ENCODE measurements at regions of chr3 and their contacts with region 1.

Region 1: DNA sequence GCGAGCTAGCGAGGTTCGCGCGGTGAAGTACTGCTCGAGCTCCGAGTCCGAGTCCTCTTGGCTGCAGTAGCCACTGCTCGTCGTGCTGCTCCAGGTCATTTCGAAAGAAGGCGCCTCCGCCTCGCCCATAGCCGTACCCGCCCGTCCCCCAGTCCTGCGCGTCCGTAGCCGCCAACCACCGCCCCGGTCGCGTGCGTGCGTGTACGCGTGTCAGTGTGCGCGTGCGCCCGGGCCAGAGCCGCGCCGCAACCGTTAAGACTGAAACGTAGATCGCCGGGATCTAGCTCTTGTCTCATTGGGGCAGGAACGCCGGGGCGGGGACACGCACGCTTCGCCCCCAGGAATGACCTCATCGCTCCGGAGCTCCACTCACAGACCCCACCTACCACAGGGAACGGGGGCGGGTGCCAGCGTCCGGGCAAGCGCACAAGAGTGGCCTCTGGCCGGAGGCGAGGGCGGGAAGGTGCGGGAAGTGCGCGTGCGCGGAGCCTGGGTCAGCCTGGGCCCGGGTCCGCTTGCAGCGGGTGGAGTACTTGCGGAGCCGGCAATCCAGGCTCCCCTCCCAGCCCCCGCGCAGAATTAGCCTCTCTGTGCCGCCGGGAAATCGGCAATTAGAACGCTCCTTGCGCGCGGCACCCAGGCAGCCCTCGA is 3.3 kb downstream of the RASSF1 start:
- DNase-seq: peak; percentile 97
- H3K4me3 ChIP-seq: peak overlapping the region; percentile 89
- H3K27me3 ChIP-seq: no peaks in the 10 kb centered on the region
- CTCF ChIP-seq: no peak

Region 2: DNA sequence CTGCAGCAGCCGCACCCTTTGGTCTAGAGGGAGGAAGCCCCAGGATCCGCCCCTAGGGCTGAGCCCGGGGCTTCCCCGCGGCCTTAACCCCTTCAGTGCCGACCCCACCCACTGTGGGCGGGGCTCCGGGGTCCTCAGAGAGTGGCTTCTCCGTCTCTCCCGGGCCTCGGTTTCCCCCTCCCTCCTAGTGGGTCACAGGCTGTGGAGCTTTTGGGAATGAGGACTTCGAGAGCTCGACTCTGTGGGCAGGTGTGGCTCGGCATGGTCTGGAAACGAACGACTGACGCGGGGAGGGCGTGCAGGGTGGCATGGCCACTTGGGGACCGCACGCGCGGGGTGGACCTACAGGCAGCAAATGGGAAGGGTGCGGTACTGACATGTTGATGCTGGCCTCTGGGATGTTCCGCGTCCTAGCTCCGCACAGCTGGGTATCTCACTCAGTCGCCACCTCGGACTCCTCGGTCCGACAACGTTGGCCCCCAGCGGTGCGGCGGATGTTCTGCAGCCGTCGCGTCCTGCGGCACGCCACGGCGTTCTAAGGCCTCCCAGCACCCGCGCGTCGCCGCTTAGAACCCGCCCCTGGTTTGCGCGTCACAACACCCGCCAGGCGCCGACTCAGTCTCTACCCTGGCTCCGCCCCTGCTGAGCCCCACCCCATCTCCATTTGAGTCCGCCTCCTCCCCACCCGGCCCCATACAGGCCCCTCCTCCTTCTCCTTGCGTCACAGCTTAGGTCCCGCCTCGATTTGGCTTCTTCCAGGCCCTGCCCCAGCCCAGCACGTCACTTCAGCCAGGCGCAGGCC is 38.3 kb before region 1 on chr3 and contains the starts of genes HYAL3 and NAA80:
- CTCF ChIA-PET with region 1: interaction called, 6 read pairs
- POLR2A ChIA-PET with region 1: interaction called, 11 read pairs
- DNase-seq: peak; percentile 98
- H3K4me3 ChIP-seq: peak within 1 kb of the TSS; percentile 54
- H3K27me3 ChIP-seq: no peaks in the 10 kb centered on the region
- CTCF ChIP-seq: peak; percentile 41
- polyA plus RNA-seq, gene HYAL3: 7.1 and 8.5 TPM in 2 replicates
- polyA plus RNA-seq, gene NAA80: 3.6 and 5.8 TPM in 2 replicates

Region 3: GRCh38 chr3:50749822-50750221 is 412.5 kb after region 1 on chr3:
- CTCF ChIA-PET with region 1: no interaction called
- POLR2A ChIA-PET with region 1: no interaction called
- DNase-seq: no peak
- H3K4me3 ChIP-seq: no peak overlapping the region
- H3K27me3 ChIP-seq: no peaks in the 10 kb centered on the region
- CTCF ChIP-seq: no peak

Measured in BJ (cell line).